Posterior vena cava (tissue), 2 donors: ENCODE measurements at regions of chr6 and their contacts with region 1.

Region 1: DNA sequence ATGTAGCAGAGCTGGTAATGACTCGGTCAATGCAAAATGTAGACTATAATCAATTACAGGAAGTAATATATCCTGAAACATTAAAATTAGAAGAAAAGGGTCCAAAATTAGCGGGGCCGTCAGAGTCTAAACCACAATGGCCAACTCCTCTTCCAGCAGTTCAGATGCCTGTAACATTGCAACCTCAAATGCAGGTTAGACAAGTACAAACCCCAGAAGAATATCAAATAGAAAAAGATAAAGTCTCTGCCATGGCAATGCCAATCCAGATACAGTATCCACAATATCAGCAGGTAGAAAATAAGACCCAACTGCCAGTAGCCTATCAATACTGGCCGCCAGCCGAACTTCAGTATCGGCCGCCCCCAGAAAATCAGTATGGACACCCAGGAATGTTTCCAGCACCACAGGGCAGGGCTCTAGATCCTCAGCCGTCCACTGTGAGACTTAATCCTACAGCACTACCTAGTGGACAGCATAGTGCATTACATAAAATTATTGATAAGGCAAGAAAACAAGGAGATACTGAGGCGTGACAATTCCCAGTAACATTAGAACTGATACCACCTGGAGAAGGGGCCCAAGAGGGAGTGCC is 158.4 kb downstream of the GPX5 start:
- DNase-seq: no peak

Region 2: DNA sequence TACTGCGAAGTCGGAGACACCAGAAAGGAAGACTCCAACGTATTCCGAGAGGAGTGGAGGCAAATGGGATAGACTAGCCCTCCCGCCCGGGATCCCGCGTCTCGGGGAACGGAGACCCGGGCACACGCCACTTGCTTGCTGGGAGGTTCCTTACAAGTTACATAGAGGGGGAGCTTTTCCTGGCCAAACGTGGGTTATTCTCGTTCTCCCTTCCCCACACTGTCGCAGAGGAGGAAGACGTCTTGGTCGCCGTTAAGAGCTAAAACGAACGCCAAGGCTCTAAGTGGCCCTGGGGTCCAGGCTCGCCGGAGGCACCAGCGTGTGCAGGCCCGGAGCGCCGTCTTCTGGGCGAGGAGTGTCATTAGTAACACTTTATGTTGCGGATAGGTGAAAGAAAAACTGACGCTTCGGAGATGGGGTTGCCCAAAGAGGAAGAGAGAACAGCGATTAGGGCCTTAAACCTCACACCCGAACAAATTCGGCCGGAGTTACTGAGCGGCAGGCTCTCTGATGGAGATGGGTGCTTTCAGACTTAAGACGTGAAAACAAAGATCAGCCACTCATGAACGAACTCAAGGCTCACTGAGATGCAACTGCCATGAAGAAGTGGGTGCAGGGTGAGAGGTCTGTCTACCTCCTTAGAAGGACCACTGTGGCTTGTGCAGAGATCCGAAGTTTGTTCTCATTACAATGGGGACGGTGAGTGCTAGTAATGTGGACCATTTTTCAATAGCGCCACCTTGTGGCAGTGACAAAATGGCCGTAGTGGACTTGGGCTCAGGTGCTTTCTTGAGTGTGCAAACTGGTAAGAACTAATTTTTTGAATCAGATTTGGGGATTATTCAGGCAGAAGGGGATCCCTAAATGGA is 332.8 kb after region 1 on chr6:
- intact Hi-C with region 1: loop called in 1 of 2 experiments (anchors 5 kb)
- DNase-seq: peak; percentile 90